ENCODE measurements at regions of chr21 and their contacts with region 1.

Region 1: GRCh38 chr21:25881525-25882376 is 147.0 kb downstream of the GABPA start:
- DNase-seq: peak; percentile 71
- H3K4me3 ChIP-seq: no peak overlapping the region
- H3K27ac ChIP-seq: no peak overlapping the region
- H3K4me1 ChIP-seq: peaks cover 6% of the 10 kb centered on the region
- H3K27me3 ChIP-seq: no peaks in the 10 kb centered on the region
- CTCF ChIP-seq: peak; percentile 97

Region 2: DNA sequence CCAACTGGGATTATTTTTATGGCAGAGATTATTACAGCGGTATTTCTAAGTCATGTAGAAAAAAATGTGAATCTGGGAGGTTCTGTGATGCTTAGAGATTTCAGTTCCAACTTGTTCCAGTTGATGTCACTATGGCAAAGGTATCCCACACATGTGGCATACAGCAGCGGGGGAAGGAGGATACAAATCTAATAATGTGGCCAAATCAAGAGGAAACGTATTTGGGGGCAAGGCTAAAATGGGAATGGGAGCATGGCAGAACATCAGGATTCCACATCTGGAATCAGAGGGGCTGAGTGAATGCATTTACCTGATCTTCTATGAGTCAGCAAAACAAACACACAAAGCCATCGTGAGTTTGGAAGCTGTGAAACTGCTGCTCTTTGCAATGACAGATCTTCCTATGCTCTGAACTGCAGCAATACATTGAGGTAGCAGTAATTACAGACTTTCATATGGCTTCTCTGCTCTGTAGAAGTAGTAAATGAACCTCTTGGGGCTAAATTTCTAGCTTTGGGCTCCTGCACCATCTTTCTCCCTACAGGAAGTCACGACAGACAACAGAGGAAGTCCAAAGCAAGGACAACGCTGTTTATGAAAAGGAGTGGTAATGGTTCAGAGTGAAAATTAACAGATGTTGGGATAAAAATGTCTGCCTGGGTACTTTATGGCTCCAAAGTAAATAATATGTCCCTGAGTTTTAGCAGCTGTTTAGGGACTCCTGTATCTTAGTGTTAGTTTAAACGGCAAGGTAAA is 91.5 kb before region 1 on chr21:
- intact Hi-C with region 1: no loop called
- DNase-seq: peak; percentile 19
- H3K4me3 ChIP-seq: peak overlapping the region; percentile 20
- H3K27ac ChIP-seq: no peak overlapping the region
- H3K4me1 ChIP-seq: no peaks in the 10 kb centered on the region
- H3K27me3 ChIP-seq: no peaks in the 10 kb centered on the region
- CTCF ChIP-seq: peak; percentile 20

Region 3: GRCh38 chr21:25831300-25831960 is 50.3 kb before region 1 on chr21:
- intact Hi-C with region 1: no loop called
- DNase-seq: no peak
- H3K4me3 ChIP-seq: no peak overlapping the region
- H3K27ac ChIP-seq: no peak overlapping the region
- H3K4me1 ChIP-seq: no peaks in the 10 kb centered on the region
- H3K27me3 ChIP-seq: no peaks in the 10 kb centered on the region
- CTCF ChIP-seq: no peak

Region 4: GRCh38 chr21:25956993-25957714 is 75.4 kb after region 1 on chr21:
- intact Hi-C with region 1: no loop called
- DNase-seq: no peak
- H3K4me3 ChIP-seq: no peak overlapping the region
- H3K27ac ChIP-seq: no peak overlapping the region
- H3K4me1 ChIP-seq: no peaks in the 10 kb centered on the region
- H3K27me3 ChIP-seq: no peaks in the 10 kb centered on the region
- CTCF ChIP-seq: no peak

Region 5: DNA sequence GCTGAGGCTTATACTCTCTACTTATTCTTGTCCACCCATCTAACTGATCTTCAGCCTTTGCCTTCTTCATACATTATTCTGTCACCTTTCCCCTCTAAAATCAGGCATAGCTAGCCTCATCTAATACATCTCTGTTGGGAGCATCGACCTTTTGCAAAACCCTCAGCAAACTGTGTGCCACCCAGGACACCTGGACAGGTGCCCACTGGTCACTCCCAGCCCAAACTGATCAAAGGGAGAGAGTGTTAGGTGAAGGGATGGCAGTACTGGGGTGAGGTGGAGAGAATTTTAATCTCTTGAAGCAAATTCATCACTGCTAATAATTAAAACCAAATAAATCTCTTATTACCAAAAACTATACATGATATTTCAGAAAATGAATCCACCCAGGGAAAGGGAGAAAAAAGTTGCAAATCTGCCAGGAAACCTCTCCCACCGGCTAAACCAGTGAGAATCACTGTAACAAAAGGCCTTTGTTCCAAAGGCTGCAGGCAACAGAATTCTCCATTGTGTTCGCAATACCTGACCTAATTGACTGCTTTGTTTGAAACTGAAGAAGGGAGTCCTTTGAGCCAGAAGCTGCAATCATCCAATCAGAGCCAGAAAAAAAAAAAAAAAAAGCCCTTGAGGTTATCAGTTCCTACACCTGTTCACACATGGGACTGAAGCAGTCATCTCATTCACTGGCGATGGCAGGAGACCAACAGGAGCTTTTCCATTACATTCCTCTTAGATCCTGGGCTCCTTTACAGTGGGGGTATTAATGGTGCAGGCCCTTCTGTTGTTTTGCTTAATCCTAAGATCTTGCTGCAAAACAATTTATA is 116.2 kb after region 1 on chr21:
- intact Hi-C with region 1: loop called (anchors 10 kb)
- DNase-seq: peak; percentile 64
- H3K4me3 ChIP-seq: no peak overlapping the region
- H3K27ac ChIP-seq: peak overlapping the region; percentile 42
- H3K4me1 ChIP-seq: peaks cover 4% of the 10 kb centered on the region
- H3K27me3 ChIP-seq: no peaks in the 10 kb centered on the region
- CTCF ChIP-seq: no peak

Region 6: GRCh38 chr21:26170471-26171257 is 288.9 kb after region 1 on chr21 and contains the start of gene APP:
- intact Hi-C with region 1: loop called (anchors 5 kb)
- DNase-seq: peak; percentile 90
- H3K4me3 ChIP-seq: peak within 1 kb of the TSS; percentile 90
- H3K27ac ChIP-seq: peak within 1 kb of the TSS; percentile 94
- H3K4me1 ChIP-seq: no peaks in the 10 kb centered on the region
- H3K27me3 ChIP-seq: no peaks in the 10 kb centered on the region
- CTCF ChIP-seq: peak; percentile 96
- total RNA-seq, gene APP: 506 to 721 TPM

Measured in colonic mucosa (tissue), 4 donors.